ENCODE measurements at regions of chr17 and their contacts with region 1.

Region 1: DNA sequence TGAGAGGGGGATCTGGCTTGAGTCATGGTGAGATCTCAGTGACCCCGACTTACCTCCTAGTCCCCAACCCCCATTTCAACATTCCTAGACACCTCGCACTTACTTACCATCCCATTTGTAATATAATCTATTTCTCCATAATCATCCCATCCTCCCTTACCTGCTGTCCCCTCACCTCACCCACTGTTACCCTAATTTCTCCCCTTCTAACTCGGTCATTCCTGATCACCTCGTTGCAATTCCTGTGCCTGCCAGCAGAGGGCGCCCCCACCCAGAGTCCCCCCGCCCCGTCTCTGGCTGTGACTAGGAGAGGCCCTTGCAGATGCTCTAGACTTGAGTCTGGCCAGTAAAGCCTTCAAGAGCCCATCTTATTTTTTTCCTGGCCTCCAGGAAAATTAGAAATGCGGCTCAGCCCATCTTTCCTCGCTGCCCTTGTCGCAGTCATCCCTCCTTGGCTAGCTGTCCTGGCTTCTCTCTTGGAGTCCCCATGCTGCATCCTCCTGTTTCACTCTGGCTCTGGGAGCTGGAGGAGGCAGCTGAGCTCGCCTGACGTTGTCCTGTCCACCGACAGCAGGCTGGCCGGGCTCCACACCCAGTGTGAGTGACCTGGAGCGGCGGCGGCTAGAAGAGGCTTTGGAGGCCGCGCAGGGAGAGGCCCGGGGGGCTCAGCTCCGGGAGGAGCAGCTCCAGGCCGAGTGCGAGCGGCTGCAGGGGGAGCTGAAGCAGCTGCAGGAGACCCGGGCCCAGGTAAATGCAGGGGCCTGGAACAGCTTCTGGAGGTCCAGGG is 5.0 kb downstream of the TBKBP1 start:
- DNase-seq: peak; percentile 29
- ATAC-seq: peak; percentile 42
- H3K4me3 ChIP-seq: no peak overlapping the region
- H3K27ac ChIP-seq: no peak overlapping the region
- H3K4me1 ChIP-seq: peaks cover 6% of the 10 kb centered on the region
- H3K27me3 ChIP-seq: no peaks in the 10 kb centered on the region
- CTCF ChIP-seq: peak; percentile 76
- POLR2A ChIP-seq: no peak
- RAD21 ChIP-seq: peak; percentile 69

Region 2: DNA sequence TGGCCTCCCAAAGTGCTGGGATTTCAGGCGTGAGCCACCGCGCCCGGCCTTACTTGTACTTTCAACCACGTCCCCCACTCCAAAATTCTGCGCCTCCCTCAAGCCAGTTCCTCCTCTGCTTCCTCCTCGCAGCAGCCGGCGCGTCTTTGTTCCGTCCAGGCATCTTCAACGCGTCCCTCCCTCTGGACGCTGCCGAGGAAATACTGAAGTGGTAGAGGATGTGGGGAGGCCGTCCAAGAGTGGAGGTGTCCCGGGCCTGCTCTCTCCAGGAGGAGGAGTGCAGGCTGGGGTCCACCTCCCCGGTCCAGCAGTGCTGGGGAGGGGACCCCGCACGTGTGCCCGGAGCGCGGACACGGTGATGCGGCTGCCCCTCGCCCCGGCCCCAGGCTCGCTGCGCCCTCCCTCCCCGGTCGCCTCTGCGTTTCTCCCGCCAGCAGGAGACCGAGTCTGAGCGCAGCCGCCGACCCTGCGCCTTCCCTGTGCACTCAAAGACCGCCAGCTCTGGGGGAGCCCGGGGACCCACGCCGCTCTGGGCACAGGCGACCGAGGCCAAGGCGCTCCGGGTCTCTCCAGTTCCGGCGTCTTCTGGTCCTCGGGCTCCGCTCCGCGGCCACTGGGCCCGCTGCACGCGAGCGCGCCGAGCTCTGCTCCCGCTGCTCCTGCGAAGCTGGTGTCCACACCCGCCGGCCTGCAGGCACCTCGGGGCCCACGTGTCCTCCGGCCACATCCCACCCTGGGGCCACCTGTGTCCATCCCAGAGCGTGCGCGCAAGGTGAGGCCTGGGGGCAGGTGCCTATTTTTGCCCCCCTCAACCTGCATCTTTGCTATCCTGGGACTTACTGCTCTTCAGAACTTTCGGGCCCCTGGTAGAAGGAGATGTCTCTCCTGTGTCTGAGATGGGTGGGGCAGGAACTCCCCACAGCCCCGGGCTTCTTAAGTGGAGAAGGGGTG is 90.9 kb after region 1 on chr17:
- CTCF ChIA-PET with region 1: interaction called, 3 read pairs
- POLR2A ChIA-PET with region 1: no interaction called
- dilution Hi-C with region 1: no loop called
- in situ Hi-C with region 1: no loop called
- intact Hi-C with region 1: loop called (anchors 2 kb)
- DNase-seq: peak; percentile 38
- ATAC-seq: peak; percentile 98
- H3K4me3 ChIP-seq: peak overlapping the region; percentile 40
- H3K27ac ChIP-seq: no peak overlapping the region
- H3K4me1 ChIP-seq: no peaks in the 10 kb centered on the region
- H3K27me3 ChIP-seq: peaks cover 53% of the 10 kb centered on the region
- CTCF ChIP-seq: peak; percentile 54
- POLR2A ChIP-seq: no peak
- RAD21 ChIP-seq: peak; percentile 61

Region 3: DNA sequence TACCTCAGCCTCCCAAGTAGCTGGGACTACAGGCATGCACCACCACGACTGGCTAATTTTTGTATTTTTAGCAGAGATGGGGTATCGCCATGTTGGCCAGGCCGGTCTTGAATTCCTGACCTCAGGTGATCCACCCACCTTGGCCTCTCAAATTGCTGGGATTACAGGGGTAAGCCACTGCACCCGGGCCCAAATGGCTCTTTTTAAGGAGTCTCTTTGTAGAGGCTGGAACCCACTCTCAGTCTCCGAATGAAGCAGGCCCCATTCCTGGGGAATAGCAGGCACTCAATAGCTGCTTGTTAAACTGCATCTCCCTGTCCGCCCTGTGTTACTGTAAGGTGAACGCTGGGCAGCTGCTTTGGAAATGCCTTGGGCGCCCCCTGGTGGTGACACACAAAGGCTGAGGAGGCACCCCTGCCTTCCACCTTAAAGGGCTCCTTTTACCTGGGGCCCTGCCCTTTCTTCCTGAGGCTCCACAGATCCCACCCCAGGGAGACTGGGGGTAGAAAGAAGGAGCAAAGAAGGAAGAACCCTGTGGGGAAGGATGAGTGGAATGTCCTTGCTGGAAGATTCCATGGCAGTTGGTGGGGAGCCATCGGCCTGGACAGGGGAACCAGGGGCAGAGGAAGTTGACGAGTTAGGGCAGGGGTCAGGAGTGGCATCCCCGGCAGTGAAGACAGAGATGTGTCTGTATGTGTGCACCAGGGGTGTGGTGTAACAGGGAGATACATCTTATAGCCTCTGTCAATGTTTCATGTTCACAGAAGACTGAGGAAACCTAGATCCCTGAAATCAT is 191.0 kb after region 1 on chr17:
- CTCF ChIA-PET with region 1: no interaction called
- POLR2A ChIA-PET with region 1: no interaction called
- dilution Hi-C with region 1: no loop called
- in situ Hi-C with region 1: no loop called
- intact Hi-C with region 1: loop called (anchors 2 kb)
- DNase-seq: peak; percentile 77
- ATAC-seq: peak; percentile 99
- H3K4me3 ChIP-seq: no peak overlapping the region
- H3K27ac ChIP-seq: no peak overlapping the region
- H3K4me1 ChIP-seq: no peaks in the 10 kb centered on the region
- H3K27me3 ChIP-seq: peaks cover under 1% of the 10 kb centered on the region; the same call in 1 of the 2 replicates
- CTCF ChIP-seq: peak; percentile 96
- POLR2A ChIP-seq: peak; percentile 54
- RAD21 ChIP-seq: peak; percentile 99

Measured in IMR-90 (cell line).